Panc1 (cell line): ENCODE measurements at regions of chrX and their contacts with region 1.

Region 1: GRCh38 chrX:112391313-112391712 is 288.4 kb downstream of the LHFPL1 start:
- DNase-seq: no peak
- ATAC-seq: no peak
- H3K4me3 ChIP-seq: no peak overlapping the region
- H3K27ac ChIP-seq: no peak overlapping the region
- H3K4me1 ChIP-seq: no peaks in the 10 kb centered on the region
- H3K27me3 ChIP-seq: no peaks in the 10 kb centered on the region
- CTCF ChIP-seq: no peak

Region 2: GRCh38 chrX:112440277-112440676 is 49.0 kb after region 1 on chrX:
- CTCF ChIA-PET with region 1: no interaction called
- POLR2A ChIA-PET with region 1: interaction called, 12 read pairs
- in situ Hi-C with region 1: no loop called
- intact Hi-C with region 1: no loop called
- DNase-seq: no peak
- ATAC-seq: no peak
- H3K4me3 ChIP-seq: no peak overlapping the region
- H3K27ac ChIP-seq: no peak overlapping the region
- H3K4me1 ChIP-seq: no peaks in the 10 kb centered on the region
- H3K27me3 ChIP-seq: no peaks in the 10 kb centered on the region
- CTCF ChIP-seq: no peak